ENCODE measurements at regions of chr14 and their contacts with region 1.

Region 1: GRCh38 chr14:96362965-96363756 is at the starts of genes ATG2B and GSKIP:
- DNase-seq: peak; percentile 78
- ATAC-seq: peak; percentile 84
- H3K4me3 ChIP-seq: peak within 1 kb of the TSS; percentile 91 to 98 (median 92)
- H3K27ac ChIP-seq: peak within 1 kb of the TSS; percentile 81
- H3K4me1 ChIP-seq: peaks cover 44% of the 10 kb centered on the region
- H3K27me3 ChIP-seq: no peaks in the 10 kb centered on the region; a peak in 1 of 5 replicates
- CTCF ChIP-seq: no peak
- EP300 ChIP-seq: no peak
- POLR2A ChIP-seq: peak; percentile 53 to 83
- RAD21 ChIP-seq: 0 out of 2 replicates have a peak, but pooled peaks have one; percentile 9
- total RNA-seq, gene ATG2B: 7.5 and 11.3 TPM in 2 replicates
- total RNA-seq, gene GSKIP: 27.3 and 52.3 TPM in 2 replicates

Region 2: DNA sequence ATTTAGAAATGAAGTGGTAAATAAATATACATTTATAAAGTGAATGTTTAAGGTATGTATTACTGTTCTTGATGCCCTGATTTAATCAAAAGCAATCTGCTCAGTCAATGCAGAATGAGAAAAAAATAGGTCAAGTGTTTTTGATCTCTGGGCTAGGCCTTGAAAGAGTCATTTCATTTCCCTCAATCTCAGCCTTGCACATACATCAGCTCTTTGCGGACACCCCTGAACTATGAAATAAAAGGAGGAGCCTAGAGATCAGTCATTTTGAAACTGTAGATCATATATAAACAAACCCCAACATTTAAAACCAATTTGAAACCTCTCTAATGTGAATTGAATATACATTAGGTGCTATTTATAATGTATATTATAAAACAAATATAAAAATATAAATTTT is 42.6 kb before region 1 on chr14:
- CTCF ChIA-PET with region 1: no interaction called
- POLR2A ChIA-PET with region 1: no interaction called
- in situ Hi-C with region 1: no loop called
- intact Hi-C with region 1: no loop called
- DNase-seq: no peak
- ATAC-seq: no peak
- H3K4me3 ChIP-seq: no peak overlapping the region
- H3K27ac ChIP-seq: no peak overlapping the region
- H3K4me1 ChIP-seq: no peaks in the 10 kb centered on the region
- H3K27me3 ChIP-seq: no peaks in the 10 kb centered on the region
- CTCF ChIP-seq: no peak
- EP300 ChIP-seq: no peak
- POLR2A ChIP-seq: no peak
- RAD21 ChIP-seq: no peak

Region 3: DNA sequence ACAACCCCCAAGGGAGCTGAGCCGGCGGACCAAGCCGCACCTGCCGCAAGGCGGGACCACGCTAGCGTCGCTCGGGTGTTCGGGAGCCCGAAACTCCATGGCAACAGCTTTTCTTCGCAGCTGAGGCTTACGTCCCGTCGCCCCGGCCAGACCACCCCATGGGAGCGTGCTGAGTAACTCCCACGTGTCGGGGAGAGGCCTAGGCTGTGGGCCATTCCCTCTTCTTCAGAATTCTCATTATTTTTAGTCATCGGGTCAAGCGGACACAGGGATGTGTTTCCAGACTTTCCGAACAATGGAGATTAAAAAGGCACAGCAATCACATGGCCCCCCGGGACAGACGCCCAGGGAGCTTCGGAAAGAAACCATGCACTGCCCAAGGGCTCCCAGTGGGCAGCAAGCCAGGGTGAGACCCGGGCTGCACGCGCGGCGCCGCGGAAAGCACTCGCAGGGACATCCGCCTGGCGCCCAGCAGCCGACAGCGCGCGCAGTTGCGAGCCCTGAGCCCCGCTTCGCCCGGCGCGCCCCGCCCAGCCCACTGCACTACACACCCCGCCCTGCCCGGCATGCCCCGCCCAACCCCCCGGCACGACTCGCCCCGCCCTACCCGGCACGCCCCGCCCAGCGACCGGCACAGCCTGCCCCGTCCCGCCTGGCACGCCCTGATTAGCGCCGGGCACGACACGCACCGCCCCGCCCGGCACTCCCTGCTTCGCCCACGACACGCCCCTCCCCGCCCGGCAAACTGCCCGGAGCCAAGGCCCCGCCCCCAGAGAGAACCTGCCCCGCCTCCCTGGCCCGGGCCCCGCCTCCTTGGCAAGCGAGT is 28.3 kb after region 1 on chr14:
- CTCF ChIA-PET with region 1: no interaction called
- POLR2A ChIA-PET with region 1: no interaction called
- in situ Hi-C with region 1: no loop called
- intact Hi-C with region 1: loop called (anchors 2 kb)
- DNase-seq: peak; percentile 82
- ATAC-seq: peak; percentile 94
- H3K4me3 ChIP-seq: peak overlapping the region; percentile 66 to 91 (median 82)
- H3K27ac ChIP-seq: no peak overlapping the region
- H3K4me1 ChIP-seq: peaks cover 18% of the 10 kb centered on the region
- H3K27me3 ChIP-seq: no peaks in the 10 kb centered on the region; a peak in 1 of 5 replicates
- CTCF ChIP-seq: no peak
- EP300 ChIP-seq: no peak
- POLR2A ChIP-seq: peak; percentile 66 to 69
- RAD21 ChIP-seq: peak; percentile 4; the same call in 1 of the 2 replicates

Measured in HepG2 (cell line).